ENCODE measurements at regions of chr10 and their contacts with region 1.

Region 1: GRCh38 chr10:96831867-96832720 is at the start of gene LCOR:
- DNase-seq: peak; percentile 90 to 93
- ATAC-seq: peak; percentile 86 to 90 (median 88)
- H3K4me3 ChIP-seq: peak within 1 kb of the TSS; percentile 87
- H3K27ac ChIP-seq: peak within 1 kb of the TSS; percentile 94
- H3K4me1 ChIP-seq: peaks cover 28% of the 10 kb centered on the region
- H3K27me3 ChIP-seq: no peaks in the 10 kb centered on the region
- CTCF ChIP-seq: no peak
- total RNA-seq, gene LCOR: 13.6 to 30.4 (median 17.0) TPM

Region 2: GRCh38 chr10:96395931-96396877 is 435.9 kb before region 1 on chr10:
- intact Hi-C with region 1: loop called (anchors 5 to 10 kb)
- DNase-seq: peak; percentile 56 to 80
- ATAC-seq: peak; percentile 75 to 94 (median 83)
- H3K4me3 ChIP-seq: no peak overlapping the region
- H3K27ac ChIP-seq: no peak overlapping the region
- H3K4me1 ChIP-seq: no peaks in the 10 kb centered on the region
- H3K27me3 ChIP-seq: peaks cover 0 to 2% (median 0%) of the 10 kb centered on the region in 3 donors
- CTCF ChIP-seq: peak; percentile 86

Region 3: DNA sequence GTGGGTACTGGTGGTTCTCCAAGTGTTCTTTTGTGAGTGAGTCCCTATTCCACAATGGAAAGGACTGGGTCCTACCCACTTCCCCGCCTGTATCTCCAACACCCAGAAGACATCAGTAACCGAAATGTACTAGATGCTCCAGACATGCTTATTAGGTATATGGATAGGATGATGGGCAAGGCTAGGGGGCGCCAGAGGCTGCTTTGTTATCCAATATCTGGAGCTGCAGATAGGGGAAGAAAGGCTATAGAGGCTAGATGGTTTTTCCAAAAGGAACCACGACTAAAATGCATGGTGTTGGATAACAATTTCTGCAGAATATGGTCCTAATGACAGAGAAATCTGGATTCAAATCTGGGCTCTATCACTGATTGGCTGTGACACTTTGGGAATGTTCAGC is 189.1 kb before region 1 on chr10:
- intact Hi-C with region 1: loop called in 1 of 2 experiments (anchors 2 kb)
- DNase-seq: peak; percentile 60 to 80
- ATAC-seq: peak in 2 of 4 donors; percentile 59 to 69
- H3K4me3 ChIP-seq: no peak overlapping the region
- H3K27ac ChIP-seq: no peak overlapping the region
- H3K4me1 ChIP-seq: no peaks in the 10 kb centered on the region
- H3K27me3 ChIP-seq: no peaks in the 10 kb centered on the region
- CTCF ChIP-seq: peak; percentile 44

Region 4: GRCh38 chr10:96910488-96911395 is 78.6 kb after region 1 on chr10:
- intact Hi-C with region 1: loop called in 1 of 2 experiments (anchors 5 kb)
- DNase-seq: no peak
- ATAC-seq: peak; percentile 65 to 86 (median 82)
- H3K4me3 ChIP-seq: no peak overlapping the region
- H3K27ac ChIP-seq: peak overlapping the region; percentile 33
- H3K4me1 ChIP-seq: peaks cover 43% of the 10 kb centered on the region
- H3K27me3 ChIP-seq: no peaks in the 10 kb centered on the region
- CTCF ChIP-seq: peak; percentile 69

Region 5: GRCh38 chr10:97025613-97026242 is 193.6 kb after region 1 on chr10:
- intact Hi-C with region 1: loop called (anchors 2 to 5 kb)
- DNase-seq: peak; percentile 39 to 70
- ATAC-seq: peak; percentile 64 to 76 (median 66)
- H3K4me3 ChIP-seq: no peak overlapping the region
- H3K27ac ChIP-seq: peak overlapping the region; percentile 91
- H3K4me1 ChIP-seq: peaks cover 24% of the 10 kb centered on the region
- H3K27me3 ChIP-seq: no peaks in the 10 kb centered on the region
- CTCF ChIP-seq: peak; percentile 75

Measured in psoas muscle (tissue), 8 donors.